Spleen (tissue), 13 donors: ENCODE measurements at regions of chr3 and their contacts with region 1.

Region 1: GRCh38 chr3:108489771-108490170 is 20.6 kb downstream of the MYH15 start:
- DNase-seq: no peak
- H3K4me3 ChIP-seq: no peak overlapping the region
- H3K27ac ChIP-seq: no peak overlapping the region
- H3K4me1 ChIP-seq: peaks cover 0 to 14% (median 2%) of the 10 kb centered on the region in 6 donors
- H3K27me3 ChIP-seq: no peaks in the 10 kb centered on the region
- CTCF ChIP-seq: peak; percentile 51 to 92 (median 81)
- POLR2A ChIP-seq: no peak

Region 2: GRCh38 chr3:107235928-107236315 is 1253.8 kb before region 1 on chr3:
- intact Hi-C with region 1: loop called (anchors 10 kb)
- DNase-seq: no peak
- H3K4me3 ChIP-seq: peak overlapping the region; percentile 0 to 65 (median 30)
- H3K27ac ChIP-seq: peak overlapping the region in 7 of 8 donors; percentile 24 to 74 (median 47)
- H3K4me1 ChIP-seq: peaks cover 0 to 30% (median 16%) of the 10 kb centered on the region in 6 donors
- H3K27me3 ChIP-seq: no peaks in the 10 kb centered on the region
- CTCF ChIP-seq: peak; percentile 58 to 95 (median 81)
- POLR2A ChIP-seq: no peak

Region 3: GRCh38 chr3:108552267-108553159 is 62.7 kb after region 1 on chr3:
- intact Hi-C with region 1: loop called (anchors 5 kb)
- DNase-seq: no peak
- H3K4me3 ChIP-seq: no peak overlapping the region
- H3K27ac ChIP-seq: peak overlapping the region in 1 of 8 donors; percentile 30
- H3K4me1 ChIP-seq: peaks cover 0 to 20% (median 12%) of the 10 kb centered on the region in 6 donors
- H3K27me3 ChIP-seq: no peaks in the 10 kb centered on the region
- CTCF ChIP-seq: peak in 8 of 11 experiments; percentile 38 to 61 (median 45)
- POLR2A ChIP-seq: no peak

Region 4: GRCh38 chr3:108914774-108915641 is 425.2 kb after region 1 on chr3:
- intact Hi-C with region 1: loop called (anchors 5 kb)
- DNase-seq: peak; percentile 79
- H3K4me3 ChIP-seq: peak overlapping the region in 1 of 8 donors; percentile 6
- H3K27ac ChIP-seq: no peak overlapping the region
- H3K4me1 ChIP-seq: peaks cover 0 to 6% (median under 1%) of the 10 kb centered on the region in 6 donors
- H3K27me3 ChIP-seq: peaks cover 0 to 7% (median 0%) of the 10 kb centered on the region in 7 donors
- CTCF ChIP-seq: peak; percentile 63 to 87 (median 81)
- POLR2A ChIP-seq: no peak